Posterior cingulate gyrus (tissue), 11 donors: ENCODE measurements at regions of chr9 and their contacts with region 1.

Region 1: GRCh38 chr9:97921959-97922724 is at the start of gene TRMO:
- DNase-seq: peak; percentile 92 to 99 (median 95)

Region 2: GRCh38 chr9:97419309-97419867 is 502.8 kb before region 1 on chr9:
- intact Hi-C with region 1: no loop called
- DNase-seq: no peak

Region 3: DNA sequence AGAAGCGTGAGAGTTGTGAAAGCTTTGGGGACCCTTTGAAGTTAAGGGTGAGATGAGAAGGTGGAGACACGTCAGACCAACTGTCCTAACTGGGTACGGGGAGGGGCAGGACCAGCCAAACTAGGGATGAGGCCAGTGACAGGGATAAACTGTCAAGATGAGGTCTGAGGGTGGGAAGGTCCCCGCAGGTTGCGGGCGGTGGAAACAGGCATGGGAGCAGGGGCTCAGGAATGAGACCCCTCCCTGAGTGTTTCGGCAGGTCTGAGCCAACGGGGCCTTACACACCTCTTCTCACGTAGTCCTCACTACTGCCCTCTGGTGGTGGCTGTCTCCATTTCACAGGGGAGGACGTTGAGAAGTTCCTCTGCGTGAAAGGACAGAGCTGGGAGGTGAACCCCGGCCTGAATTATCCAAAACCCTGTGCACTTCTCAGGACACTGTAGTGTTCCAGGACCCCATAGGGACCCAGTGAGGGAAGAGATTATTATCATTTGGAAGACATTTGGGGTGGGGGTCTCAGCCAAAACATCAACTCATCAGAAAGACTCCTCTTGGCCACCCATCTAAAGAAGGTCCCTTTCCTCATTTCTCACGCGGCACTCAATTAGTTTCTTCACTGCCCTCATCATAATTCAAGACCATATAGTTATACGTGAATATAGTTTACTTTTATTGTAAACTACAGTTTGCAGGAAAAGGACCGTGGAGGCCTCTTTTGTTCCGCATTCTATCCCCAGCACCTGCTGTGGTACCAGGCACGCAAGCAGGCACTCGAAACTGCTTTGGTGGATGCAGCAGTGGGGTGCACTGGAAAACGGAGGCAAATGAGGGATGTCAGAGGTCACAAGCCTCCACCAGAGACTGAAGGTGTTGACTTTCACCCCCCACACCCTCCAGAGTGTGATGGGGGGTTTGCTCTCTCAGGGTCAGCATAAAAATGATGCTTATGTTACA is 112.7 kb after region 1 on chr9:
- intact Hi-C with region 1: loop called (anchors 1 kb)
- DNase-seq: peak; percentile 37 to 95 (median 83)